ENCODE measurements at regions of chr2 and their contacts with region 1.

Region 1: DNA sequence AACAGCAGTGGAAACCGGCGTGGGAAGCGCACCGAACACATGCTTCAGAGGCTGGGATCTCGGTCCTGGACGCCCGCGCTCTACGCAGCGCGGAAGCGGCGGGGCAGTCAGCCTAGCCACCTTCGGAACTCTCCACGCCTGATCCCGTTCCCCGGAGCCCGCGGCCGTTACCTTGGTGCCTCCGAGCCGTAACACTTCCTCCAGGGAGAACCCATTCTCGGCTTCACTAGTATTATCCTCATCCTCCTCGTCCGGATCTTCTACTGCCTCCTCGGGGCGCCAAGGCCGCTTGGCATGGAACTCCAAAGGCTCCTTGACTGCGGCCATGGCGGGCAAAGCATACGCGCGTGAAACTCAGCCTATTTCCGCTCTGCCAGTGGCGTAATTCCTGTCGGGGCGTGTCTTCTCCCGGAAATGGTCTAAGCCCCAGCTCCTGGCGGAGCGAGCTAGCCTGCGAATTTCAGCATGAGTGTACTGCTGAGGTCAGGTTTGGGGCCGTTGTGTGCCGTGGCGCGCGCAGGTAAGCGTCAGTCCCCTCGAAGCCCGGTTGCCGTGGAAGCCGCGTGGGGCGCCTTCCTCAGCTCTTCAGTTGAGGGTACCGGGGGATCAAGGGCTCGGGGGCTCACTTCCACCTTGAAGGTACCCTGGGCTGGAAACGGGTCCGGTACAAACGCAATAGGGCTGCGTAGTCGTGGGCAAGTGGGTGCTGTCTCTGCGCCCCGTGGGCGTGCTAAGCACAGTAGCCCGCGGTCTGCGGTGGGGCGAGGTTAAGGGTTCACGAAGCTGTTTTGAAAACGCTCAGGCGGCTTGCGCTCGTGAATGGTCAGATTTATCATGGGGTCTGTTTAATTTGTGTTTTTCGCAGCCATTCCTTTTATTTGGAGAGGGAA is at the starts of genes CEBPZ and NDUFAF7:
- DNase-seq: peak; percentile 94
- H3K4me3 Mint-ChIP-seq: no peak within 1 kb of the TSS
- H3K27ac Mint-ChIP-seq: no peak within 1 kb of the TSS
- H3K4me1 Mint-ChIP-seq: peaks cover 6% of the 10 kb centered on the region
- H3K27me3 Mint-ChIP-seq: no peaks in the 10 kb centered on the region
- CTCF ChIP-seq: no peak
- total RNA-seq, gene CEBPZ: 46.6 and 61.7 TPM in 2 replicates
- total RNA-seq, gene NDUFAF7: 16.1 and 18.3 TPM in 2 replicates

Region 2: DNA sequence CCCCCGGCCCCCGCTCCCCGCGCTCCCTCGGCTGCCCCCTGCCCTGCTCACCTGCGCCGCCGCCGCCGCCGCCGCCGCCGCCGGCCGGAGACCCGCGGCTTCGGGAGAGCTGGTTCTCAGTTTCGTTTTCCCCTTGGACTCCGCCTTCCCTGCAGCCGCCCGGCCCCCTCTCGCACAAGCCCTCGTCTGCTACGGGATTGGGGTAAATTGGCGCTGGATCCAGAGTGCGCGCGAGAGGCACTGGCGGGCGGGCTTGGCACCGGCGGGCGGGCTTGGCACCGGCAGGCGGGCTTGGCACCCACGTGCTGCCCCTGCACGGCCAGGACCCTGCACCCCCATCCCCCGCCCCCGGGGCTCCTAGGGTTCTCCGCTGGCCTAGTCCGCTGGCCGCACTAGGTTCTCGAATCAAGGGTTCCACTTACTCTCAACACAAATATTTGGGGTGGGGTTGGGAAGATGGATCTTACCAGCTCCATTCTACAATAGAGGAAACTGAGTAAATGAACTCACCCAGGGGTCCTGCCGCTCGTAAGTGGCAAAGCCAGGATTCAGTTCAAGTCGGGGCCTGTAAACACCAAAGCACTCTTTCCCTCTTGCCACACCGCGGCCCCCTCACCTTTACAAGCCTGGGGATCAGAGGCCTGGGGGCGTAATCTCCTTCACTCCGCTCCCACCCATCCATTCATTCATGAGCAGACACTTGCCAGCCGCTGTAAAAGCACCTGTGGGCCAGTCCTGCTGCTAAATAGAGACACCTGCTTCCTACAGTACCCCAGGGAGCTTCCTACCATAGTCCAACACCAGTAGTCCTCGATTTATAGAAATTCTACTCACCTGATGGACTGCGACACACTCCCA is 74.4 kb before region 1 on chr2 and contains the start of gene EIF2AK2:
- CTCF ChIA-PET with region 1: no interaction called
- POLR2A ChIA-PET with region 1: interaction called, 18 read pairs
- intact Hi-C with region 1: no loop called
- DNase-seq: peak; percentile 90
- H3K4me3 Mint-ChIP-seq: peak within 1 kb of the TSS; percentile 84
- H3K27ac Mint-ChIP-seq: peak within 1 kb of the TSS; percentile 90
- H3K4me1 Mint-ChIP-seq: peaks cover 28% of the 10 kb centered on the region
- H3K27me3 Mint-ChIP-seq: no peaks in the 10 kb centered on the region
- CTCF ChIP-seq: no peak
- total RNA-seq, gene EIF2AK2: 29.6 and 39.3 TPM in 2 replicates

Region 3: DNA sequence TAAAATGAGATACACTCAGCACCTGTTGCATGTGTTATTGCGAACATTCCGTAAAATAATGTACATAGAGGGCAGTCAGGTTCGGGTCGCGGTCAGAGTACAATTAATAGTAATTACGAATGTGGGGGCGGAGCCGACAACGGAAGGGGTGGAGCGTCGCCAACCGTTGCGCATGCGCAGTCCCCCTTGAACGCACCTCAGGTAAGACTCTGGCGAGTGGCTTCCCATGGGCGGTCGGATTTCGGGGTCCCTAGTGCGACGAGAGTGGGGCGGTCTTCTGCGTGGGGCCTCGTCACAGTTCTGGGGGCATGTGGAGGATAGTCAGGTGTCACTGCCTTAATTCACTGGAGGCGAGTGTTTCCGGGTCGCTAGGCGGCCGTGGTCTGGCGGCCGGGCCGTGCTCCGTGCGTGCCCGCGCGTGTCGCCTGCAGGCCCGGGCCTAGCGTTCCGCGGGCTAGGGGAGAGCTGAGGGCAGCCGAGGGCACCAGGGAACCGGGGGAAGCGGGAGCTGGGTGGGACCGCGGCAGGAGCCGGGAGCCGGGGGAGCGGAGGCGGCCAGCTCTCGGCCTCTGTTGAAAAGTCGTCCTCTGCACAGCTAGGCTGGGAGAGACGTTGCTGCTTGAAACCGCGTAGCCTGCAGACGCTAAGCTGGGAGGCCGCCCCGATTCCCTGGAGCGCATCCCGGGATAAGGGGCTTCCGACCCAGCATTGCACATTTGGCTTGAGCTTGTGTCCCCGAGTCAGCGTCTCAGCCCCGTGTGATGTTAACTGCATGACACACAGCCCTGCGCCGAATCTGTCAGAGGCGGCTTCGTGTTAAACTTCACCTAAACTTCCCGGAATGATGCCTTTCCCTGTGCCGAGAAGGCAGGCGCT is 34.9 kb before region 1 on chr2 and contains the start of gene CEBPZOS:
- CTCF ChIA-PET with region 1: interaction called, 3 read pairs
- POLR2A ChIA-PET with region 1: interaction called, 13 read pairs
- intact Hi-C with region 1: no loop called
- DNase-seq: peak; percentile 84
- H3K4me3 Mint-ChIP-seq: peak within 1 kb of the TSS; percentile 85
- H3K27ac Mint-ChIP-seq: peak within 1 kb of the TSS; percentile 87
- H3K4me1 Mint-ChIP-seq: peaks cover 6% of the 10 kb centered on the region
- H3K27me3 Mint-ChIP-seq: no peaks in the 10 kb centered on the region
- CTCF ChIP-seq: no peak
- total RNA-seq, gene CEBPZOS: 38.5 and 64.5 TPM in 2 replicates

Region 4: GRCh38 chr2:37246205-37246604 is 14.7 kb after region 1 on chr2:
- CTCF ChIA-PET with region 1: no interaction called
- POLR2A ChIA-PET with region 1: interaction called, 24 read pairs
- intact Hi-C with region 1: no loop called
- DNase-seq: no peak
- H3K4me3 Mint-ChIP-seq: no peak overlapping the region
- H3K27ac Mint-ChIP-seq: no peak overlapping the region
- H3K4me1 Mint-ChIP-seq: no peaks in the 10 kb centered on the region
- H3K27me3 Mint-ChIP-seq: no peaks in the 10 kb centered on the region
- CTCF ChIP-seq: no peak

Measured in MCF 10A (cell line).